ENCODE measurements at regions of chr14 and their contacts with region 1.

Region 1: GRCh38 chr14:20682435-20683124 is 1.8 kb upstream of the RNASE4 start:
- H3K4me3 Mint-ChIP-seq: no peak overlapping the region
- H3K27ac Mint-ChIP-seq: no peak overlapping the region
- H3K4me1 Mint-ChIP-seq: peaks cover 32% of the 10 kb centered on the region
- H3K27me3 Mint-ChIP-seq: no peaks in the 10 kb centered on the region

Region 2: GRCh38 chr14:20327005-20327869 is 355.3 kb before region 1 on chr14:
- intact Hi-C with region 1: loop called (anchors 5 kb)
- H3K4me3 Mint-ChIP-seq: no peak overlapping the region
- H3K27ac Mint-ChIP-seq: no peak overlapping the region
- H3K4me1 Mint-ChIP-seq: peaks cover 15% of the 10 kb centered on the region
- H3K27me3 Mint-ChIP-seq: no peaks in the 10 kb centered on the region

Region 3: GRCh38 chr14:20343092-20343861 is 339.3 kb before region 1 on chr14 and contains the start of gene PARP2:
- intact Hi-C with region 1: loop called (anchors 2 kb)
- H3K4me3 Mint-ChIP-seq: peak within 1 kb of the TSS; percentile 82
- H3K27ac Mint-ChIP-seq: peak within 1 kb of the TSS; percentile 92
- H3K4me1 Mint-ChIP-seq: peaks cover 7% of the 10 kb centered on the region
- H3K27me3 Mint-ChIP-seq: no peaks in the 10 kb centered on the region

Region 4: DNA sequence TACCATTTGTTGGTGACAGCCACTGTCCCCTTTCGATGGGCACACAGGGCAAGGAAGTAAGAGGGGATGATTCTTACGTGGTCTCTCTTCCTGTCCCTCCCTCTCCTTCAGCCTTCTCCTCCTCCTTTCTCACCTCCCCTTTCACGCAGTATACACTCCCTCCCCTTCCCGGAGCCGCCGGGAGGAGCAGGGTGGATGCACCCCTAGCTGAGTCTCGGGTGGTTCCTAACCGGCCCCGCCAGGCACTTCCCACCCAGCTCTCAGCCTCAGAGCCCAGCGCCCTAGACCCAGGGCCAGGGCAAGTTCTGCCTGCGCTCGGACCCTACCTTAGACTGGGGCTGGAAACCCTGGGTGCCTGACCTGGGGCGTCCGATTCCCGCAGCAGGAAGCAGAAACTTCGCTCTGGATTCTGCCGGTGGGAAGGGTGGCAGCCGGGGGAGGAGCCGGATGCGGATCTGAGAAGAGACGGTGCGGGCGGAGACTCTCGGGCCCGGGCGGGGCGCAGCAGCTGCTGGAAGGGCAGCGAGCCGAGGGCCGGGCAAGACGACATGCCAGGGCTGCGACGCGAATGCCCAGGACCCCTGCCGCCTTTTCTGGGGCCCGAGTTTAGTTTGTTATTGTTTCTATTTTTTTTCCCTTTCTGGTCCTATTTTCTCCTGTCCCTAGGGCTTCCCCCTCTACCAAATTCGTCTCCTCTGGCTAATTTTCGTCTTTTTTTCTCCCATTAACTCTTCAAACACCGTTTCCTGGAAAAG is 269.4 kb before region 1 on chr14 and contains the start of gene TEP1:
- intact Hi-C with region 1: loop called (anchors 5 kb)
- H3K4me3 Mint-ChIP-seq: peak within 1 kb of the TSS; percentile 95
- H3K27ac Mint-ChIP-seq: peak within 1 kb of the TSS; percentile 92
- H3K4me1 Mint-ChIP-seq: peaks cover 44% of the 10 kb centered on the region
- H3K27me3 Mint-ChIP-seq: no peaks in the 10 kb centered on the region

Region 5: GRCh38 chr14:20662968-20663732 is 19.4 kb before region 1 on chr14:
- intact Hi-C with region 1: loop called (anchors 2 kb)
- H3K4me3 Mint-ChIP-seq: peak overlapping the region; percentile 83
- H3K27ac Mint-ChIP-seq: peak overlapping the region; percentile 52
- H3K4me1 Mint-ChIP-seq: peaks cover 55% of the 10 kb centered on the region
- H3K27me3 Mint-ChIP-seq: peaks cover 36% of the 10 kb centered on the region

Measured in dendritic cell treated with granulocyte-macrophage colony-stimulating factor and Interleukin-4, amounts not matched to agents 40 ng/mL and 50 ng/mL, for 4 days (primary cell).